ENCODE measurements at regions of chr12 and their contacts with region 1.

Region 1: GRCh38 chr12:3964439-3964838 is 91.2 kb upstream of the PARP11 start:
- DNase-seq: no peak
- ATAC-seq: no peak
- H3K4me3 ChIP-seq: no peak overlapping the region
- H3K4me3 Mint-ChIP-seq: no peak overlapping the region
- H3K27ac ChIP-seq: no peak overlapping the region
- H3K27ac Mint-ChIP-seq: no peak overlapping the region
- H3K4me1 ChIP-seq: peaks cover 20% of the 10 kb centered on the region
- H3K4me1 Mint-ChIP-seq: peaks cover 29% of the 10 kb centered on the region
- H3K27me3 ChIP-seq: no peaks in the 10 kb centered on the region
- H3K27me3 Mint-ChIP-seq: no peaks in the 10 kb centered on the region
- CTCF ChIP-seq: no peak

Region 2: GRCh38 chr12:3841783-3842182 is 122.7 kb before region 1 on chr12:
- CTCF ChIA-PET with region 1: no interaction called
- POLR2A ChIA-PET with region 1: no interaction called
- intact Hi-C with region 1: no loop called
- DNase-seq: no peak
- ATAC-seq: no peak
- H3K4me3 ChIP-seq: no peak overlapping the region
- H3K4me3 Mint-ChIP-seq: no peak overlapping the region
- H3K27ac ChIP-seq: no peak overlapping the region
- H3K27ac Mint-ChIP-seq: no peak overlapping the region
- H3K4me1 ChIP-seq: no peaks in the 10 kb centered on the region
- H3K4me1 Mint-ChIP-seq: peaks cover 45% of the 10 kb centered on the region
- H3K27me3 ChIP-seq: no peaks in the 10 kb centered on the region
- H3K27me3 Mint-ChIP-seq: no peaks in the 10 kb centered on the region
- CTCF ChIP-seq: no peak

Region 3: GRCh38 chr12:3905664-3906063 is 58.8 kb before region 1 on chr12:
- CTCF ChIA-PET with region 1: interaction called, 13 read pairs
- POLR2A ChIA-PET with region 1: interaction called, 9 read pairs
- intact Hi-C with region 1: no loop called
- DNase-seq: no peak
- ATAC-seq: no peak
- H3K4me3 ChIP-seq: peak overlapping the region; percentile 27 to 34
- H3K4me3 Mint-ChIP-seq: peak overlapping the region; percentile 82
- H3K27ac ChIP-seq: peak overlapping the region in 1 of 2 experiments; percentile 40
- H3K27ac Mint-ChIP-seq: peak overlapping the region; percentile 90
- H3K4me1 ChIP-seq: peaks cover 17% of the 10 kb centered on the region
- H3K4me1 Mint-ChIP-seq: peaks cover 33% of the 10 kb centered on the region
- H3K27me3 ChIP-seq: no peaks in the 10 kb centered on the region
- H3K27me3 Mint-ChIP-seq: no peaks in the 10 kb centered on the region
- CTCF ChIP-seq: no peak

Region 4: DNA sequence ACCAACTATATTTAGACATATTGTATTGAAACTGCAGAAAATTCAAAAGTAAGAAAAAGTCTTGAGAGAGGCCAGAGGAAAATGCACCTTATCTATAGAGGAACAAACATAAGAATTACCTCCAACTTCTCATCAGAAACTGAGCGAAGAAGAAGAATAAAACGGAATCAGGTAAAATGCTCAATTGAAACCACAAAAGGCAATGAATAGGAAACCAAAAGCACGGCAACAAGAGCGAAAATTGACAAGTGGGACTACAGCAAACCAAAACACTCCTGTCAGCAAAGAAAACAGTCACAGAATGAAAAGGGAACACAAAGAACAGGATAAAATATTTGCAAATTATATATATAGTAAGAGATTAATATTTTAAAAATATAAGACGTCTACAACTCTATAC is 29.4 kb before region 1 on chr12:
- CTCF ChIA-PET with region 1: interaction called, 20 read pairs
- POLR2A ChIA-PET with region 1: interaction called, 3 read pairs
- intact Hi-C with region 1: loop called in 1 of 2 experiments (anchors 2 kb)
- DNase-seq: peak in 2 of 9 experiments; percentile 29 to 48
- ATAC-seq: no peak
- H3K4me3 ChIP-seq: no peak overlapping the region
- H3K4me3 Mint-ChIP-seq: peak overlapping the region; percentile 33
- H3K27ac ChIP-seq: no peak overlapping the region
- H3K27ac Mint-ChIP-seq: peak overlapping the region; percentile 75
- H3K4me1 ChIP-seq: peaks cover 31% of the 10 kb centered on the region
- H3K4me1 Mint-ChIP-seq: peaks cover 47% of the 10 kb centered on the region
- H3K27me3 ChIP-seq: no peaks in the 10 kb centered on the region
- H3K27me3 Mint-ChIP-seq: no peaks in the 10 kb centered on the region
- CTCF ChIP-seq: no peak

Region 5: DNA sequence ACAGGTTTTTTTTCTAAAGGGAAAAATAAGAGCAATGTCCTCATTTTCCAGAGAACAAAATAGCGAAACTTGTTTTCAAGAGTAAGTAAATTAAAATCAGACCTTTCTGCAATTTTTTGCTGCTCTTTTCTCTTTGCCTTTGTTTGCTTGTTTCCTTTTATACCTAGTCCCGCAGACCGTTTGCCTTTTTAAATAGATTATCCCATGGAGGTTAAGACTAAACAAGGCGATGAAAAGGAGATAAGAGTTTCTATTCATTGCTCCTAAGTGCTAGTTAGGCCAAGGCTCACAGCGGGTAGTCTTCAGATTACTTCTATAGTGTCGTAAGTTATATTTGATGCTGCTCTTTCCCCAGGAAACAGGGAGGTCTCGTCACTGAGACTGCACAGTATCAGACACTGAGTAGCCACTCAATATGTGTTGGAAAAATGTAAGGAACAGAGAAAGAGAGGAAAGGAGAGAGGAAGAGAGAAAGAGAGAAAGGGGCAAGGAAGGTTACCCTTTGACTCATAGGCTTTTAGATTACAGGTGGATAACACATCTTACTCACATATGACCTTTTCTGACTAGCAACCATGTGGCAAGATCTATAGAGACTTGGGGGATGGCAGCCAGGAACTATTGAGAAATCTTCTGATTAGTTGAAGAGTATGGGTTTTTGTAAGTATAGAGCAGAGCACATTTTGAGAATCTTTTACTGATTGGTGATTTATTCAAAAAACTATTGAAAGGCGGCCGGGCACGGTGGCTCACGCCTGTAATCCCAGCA is 16.2 kb after region 1 on chr12:
- CTCF ChIA-PET with region 1: interaction called, 57 read pairs
- POLR2A ChIA-PET with region 1: interaction called, 33 read pairs
- intact Hi-C with region 1: loop called in 1 of 2 experiments (anchors 1 kb)
- DNase-seq: no peak
- ATAC-seq: no peak
- H3K4me3 ChIP-seq: no peak overlapping the region
- H3K4me3 Mint-ChIP-seq: no peak overlapping the region
- H3K27ac ChIP-seq: no peak overlapping the region
- H3K27ac Mint-ChIP-seq: no peak overlapping the region
- H3K4me1 ChIP-seq: peaks cover 27% of the 10 kb centered on the region
- H3K4me1 Mint-ChIP-seq: peaks cover 34% of the 10 kb centered on the region
- H3K27me3 ChIP-seq: no peaks in the 10 kb centered on the region
- H3K27me3 Mint-ChIP-seq: no peaks in the 10 kb centered on the region
- CTCF ChIP-seq: no peak

Region 6: DNA sequence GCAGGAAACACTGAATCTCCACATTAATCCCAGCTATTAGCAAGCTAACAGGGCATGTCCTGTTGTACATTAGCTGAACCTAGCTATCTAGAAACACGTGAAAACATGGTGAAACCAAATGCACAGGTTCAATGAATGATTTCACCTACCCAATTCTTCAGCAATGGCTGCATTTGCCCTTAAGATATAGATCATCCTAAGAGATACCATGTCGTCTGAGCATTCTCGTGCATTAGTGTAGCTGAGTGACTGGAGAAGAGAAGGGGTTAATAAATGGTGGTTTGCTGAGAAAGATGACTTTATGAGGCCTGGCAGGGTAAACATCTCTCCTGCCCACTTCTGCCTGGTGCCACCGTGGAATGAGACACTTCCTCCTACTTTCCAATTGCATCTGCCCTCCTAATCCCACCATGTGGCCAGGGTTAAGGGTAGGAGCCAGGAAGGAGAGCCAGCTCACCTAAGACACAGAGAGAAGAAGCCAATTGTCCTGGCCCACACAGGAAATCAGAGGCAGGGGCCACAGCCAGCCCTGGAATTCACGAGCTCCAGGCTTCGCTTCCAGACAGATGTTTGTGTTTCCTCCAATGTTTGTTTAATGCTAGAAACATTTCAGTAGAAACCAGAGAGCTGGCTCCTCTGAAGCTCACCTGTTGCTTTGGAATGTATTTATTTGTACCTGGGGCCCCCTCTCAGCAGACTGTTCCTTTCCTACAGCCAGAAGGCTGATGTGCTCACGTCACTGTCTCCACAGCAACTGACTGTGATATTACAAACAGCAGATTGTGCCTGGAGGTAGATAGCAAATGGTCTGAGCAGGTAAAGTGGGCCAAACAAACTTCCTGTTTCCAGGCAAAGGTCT is 34.8 kb after region 1 on chr12:
- CTCF ChIA-PET with region 1: interaction called, 103 read pairs
- POLR2A ChIA-PET with region 1: interaction called, 5 read pairs
- intact Hi-C with region 1: loop called in 1 of 2 experiments (anchors 2 kb)
- DNase-seq: peak in 3 of 9 experiments; percentile 32 to 56 (median 33)
- ATAC-seq: peak; percentile 69
- H3K4me3 ChIP-seq: no peak overlapping the region
- H3K4me3 Mint-ChIP-seq: no peak overlapping the region
- H3K27ac ChIP-seq: no peak overlapping the region
- H3K27ac Mint-ChIP-seq: no peak overlapping the region
- H3K4me1 ChIP-seq: peaks cover 15% of the 10 kb centered on the region
- H3K4me1 Mint-ChIP-seq: peaks cover 24% of the 10 kb centered on the region
- H3K27me3 ChIP-seq: no peaks in the 10 kb centered on the region
- H3K27me3 Mint-ChIP-seq: no peaks in the 10 kb centered on the region
- CTCF ChIP-seq: no peak

Region 7: GRCh38 chr12:4037747-4038312 is 73.4 kb after region 1 on chr12:
- CTCF ChIA-PET with region 1: interaction called, 58 read pairs
- POLR2A ChIA-PET with region 1: interaction called, 3 read pairs
- intact Hi-C with region 1: loop called in 1 of 2 experiments (anchors 5 kb)
- DNase-seq: peak in 4 of 9 experiments; percentile 18 to 42 (median 24)
- ATAC-seq: no peak
- H3K4me3 ChIP-seq: no peak overlapping the region
- H3K4me3 Mint-ChIP-seq: no peak overlapping the region
- H3K27ac ChIP-seq: no peak overlapping the region
- H3K27ac Mint-ChIP-seq: no peak overlapping the region
- H3K4me1 ChIP-seq: no peaks in the 10 kb centered on the region
- H3K4me1 Mint-ChIP-seq: no peaks in the 10 kb centered on the region
- H3K27me3 ChIP-seq: no peaks in the 10 kb centered on the region
- H3K27me3 Mint-ChIP-seq: no peaks in the 10 kb centered on the region
- CTCF ChIP-seq: peak; percentile 42